Right ventricle myocardium superior (tissue), 1 donor: ENCODE measurements at regions of chr17 and their contacts with region 1.

Region 1: DNA sequence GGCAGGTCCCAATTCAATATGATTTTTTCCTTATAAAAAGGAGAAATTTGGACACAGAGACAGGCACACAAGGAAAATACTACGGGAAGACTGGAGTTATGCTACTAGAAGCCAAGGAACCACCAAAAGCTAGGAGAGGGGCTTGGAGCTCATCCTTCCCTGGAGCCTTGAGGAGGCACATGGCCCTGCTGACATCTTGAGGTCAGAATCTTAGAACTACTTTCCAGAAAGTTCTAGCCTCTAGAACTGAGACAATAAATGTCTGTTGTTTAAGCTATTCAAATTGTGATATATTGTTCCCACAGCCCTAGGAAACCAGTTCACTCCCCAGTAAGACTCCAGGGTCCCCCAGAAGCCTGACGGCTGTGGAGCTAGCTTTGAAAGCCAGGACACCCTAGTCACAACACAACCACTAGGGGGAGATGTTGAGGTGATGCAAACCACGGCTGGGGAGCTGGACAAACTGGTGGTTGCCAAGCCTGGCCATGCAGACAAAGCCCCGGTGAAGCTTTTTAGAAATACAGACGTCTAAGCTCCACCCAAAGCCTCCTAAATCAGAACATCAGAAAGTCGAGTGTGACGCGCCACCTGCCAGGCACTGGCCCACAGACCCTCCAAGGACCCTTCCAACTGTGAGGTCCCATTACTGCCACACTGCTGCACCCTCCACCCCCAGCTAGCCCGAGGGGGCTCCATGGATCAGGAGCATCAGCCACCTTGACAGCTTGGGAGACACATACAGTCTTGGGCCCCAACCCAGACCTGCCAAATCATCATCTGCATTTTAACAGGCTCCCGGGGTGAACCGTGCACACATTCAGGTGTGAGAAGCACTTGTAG is 106.4 kb downstream of the SLC39A11 start:
- DNase-seq: peak; percentile 64
- ATAC-seq: peak; percentile 83

Region 2: GRCh38 chr17:72916991-72917390 is 69.1 kb before region 1 on chr17:
- intact Hi-C with region 1: no loop called
- DNase-seq: no peak
- ATAC-seq: no peak

Region 3: GRCh38 chr17:73156166-73156840 is 170.2 kb after region 1 on chr17:
- intact Hi-C with region 1: loop called (anchors 10 kb)
- DNase-seq: peak; percentile 81
- ATAC-seq: peak; percentile 98